Caco-2 (cell line): ENCODE measurements at regions of chr10 and their contacts with region 1.

Region 1: DNA sequence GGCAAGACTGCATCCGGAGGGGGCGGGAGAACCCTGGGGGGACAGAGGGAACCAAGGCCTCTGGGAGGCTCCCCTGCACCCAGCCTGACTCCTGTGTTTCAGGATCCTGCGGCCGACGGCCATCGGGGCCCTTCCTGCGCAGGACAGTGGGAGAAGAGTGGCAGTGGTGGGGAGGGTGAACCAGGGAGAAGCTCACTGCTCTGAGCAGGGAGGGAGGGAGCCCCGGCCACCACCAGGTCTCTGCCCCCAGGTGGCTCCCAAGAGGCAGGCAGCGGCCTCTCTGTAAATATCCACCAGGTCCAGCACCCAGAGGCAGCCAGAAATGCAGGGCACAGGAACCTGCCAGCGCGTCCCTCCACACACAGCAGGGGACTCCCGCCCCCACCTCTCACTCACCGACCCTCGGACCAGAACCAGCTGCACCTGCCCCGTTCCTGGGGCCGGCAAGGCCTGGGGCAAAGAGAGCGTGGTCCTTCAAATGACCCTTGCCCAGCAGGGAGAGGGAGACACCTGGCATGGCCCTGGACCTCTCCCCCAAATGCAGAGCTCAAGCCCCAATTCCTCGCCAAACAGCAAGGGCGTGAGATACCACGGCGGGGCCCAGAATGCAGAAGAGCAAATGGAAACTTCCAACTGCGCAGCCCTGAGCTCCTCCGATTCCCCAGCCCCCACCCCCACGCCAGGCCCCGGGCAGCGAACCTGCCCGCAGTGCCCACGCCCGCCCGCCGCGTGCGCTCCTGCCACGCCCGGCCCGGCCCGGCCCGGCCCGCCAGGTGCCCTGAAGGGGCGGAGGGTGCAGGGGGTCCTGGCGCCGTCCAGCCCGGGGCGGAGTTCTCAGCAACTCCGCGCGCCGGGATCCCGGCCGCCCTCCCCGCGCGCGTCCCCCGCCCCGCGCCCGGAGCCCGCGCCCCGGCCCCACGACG is 805 bp downstream of the RASGEF1A start:
- DNase-seq: peak; percentile 80 to 86
- H3K4me3 ChIP-seq: peak overlapping the region; percentile 43
- H3K4me3 Mint-ChIP-seq: peak overlapping the region; percentile 73
- H3K27ac Mint-ChIP-seq: no peak overlapping the region
- H3K4me1 ChIP-seq: no peaks in the 10 kb centered on the region
- H3K4me1 Mint-ChIP-seq: no peaks in the 10 kb centered on the region
- H3K27me3 ChIP-seq: peaks cover 9% of the 10 kb centered on the region
- H3K27me3 Mint-ChIP-seq: peaks cover 32% of the 10 kb centered on the region
- CTCF ChIP-seq: peak; percentile 83 to 88

Region 2: GRCh38 chr10:43215758-43216455 is 50.2 kb before region 1 on chr10:
- CTCF ChIA-PET with region 1: no interaction called
- POLR2A ChIA-PET with region 1: no interaction called
- intact Hi-C with region 1: no loop called
- DNase-seq: no peak
- H3K4me3 ChIP-seq: no peak overlapping the region
- H3K4me3 Mint-ChIP-seq: no peak overlapping the region
- H3K27ac Mint-ChIP-seq: no peak overlapping the region
- H3K4me1 ChIP-seq: no peaks in the 10 kb centered on the region
- H3K4me1 Mint-ChIP-seq: no peaks in the 10 kb centered on the region
- H3K27me3 ChIP-seq: no peaks in the 10 kb centered on the region
- H3K27me3 Mint-ChIP-seq: peaks cover 14% of the 10 kb centered on the region
- CTCF ChIP-seq: no peak

Region 3: DNA sequence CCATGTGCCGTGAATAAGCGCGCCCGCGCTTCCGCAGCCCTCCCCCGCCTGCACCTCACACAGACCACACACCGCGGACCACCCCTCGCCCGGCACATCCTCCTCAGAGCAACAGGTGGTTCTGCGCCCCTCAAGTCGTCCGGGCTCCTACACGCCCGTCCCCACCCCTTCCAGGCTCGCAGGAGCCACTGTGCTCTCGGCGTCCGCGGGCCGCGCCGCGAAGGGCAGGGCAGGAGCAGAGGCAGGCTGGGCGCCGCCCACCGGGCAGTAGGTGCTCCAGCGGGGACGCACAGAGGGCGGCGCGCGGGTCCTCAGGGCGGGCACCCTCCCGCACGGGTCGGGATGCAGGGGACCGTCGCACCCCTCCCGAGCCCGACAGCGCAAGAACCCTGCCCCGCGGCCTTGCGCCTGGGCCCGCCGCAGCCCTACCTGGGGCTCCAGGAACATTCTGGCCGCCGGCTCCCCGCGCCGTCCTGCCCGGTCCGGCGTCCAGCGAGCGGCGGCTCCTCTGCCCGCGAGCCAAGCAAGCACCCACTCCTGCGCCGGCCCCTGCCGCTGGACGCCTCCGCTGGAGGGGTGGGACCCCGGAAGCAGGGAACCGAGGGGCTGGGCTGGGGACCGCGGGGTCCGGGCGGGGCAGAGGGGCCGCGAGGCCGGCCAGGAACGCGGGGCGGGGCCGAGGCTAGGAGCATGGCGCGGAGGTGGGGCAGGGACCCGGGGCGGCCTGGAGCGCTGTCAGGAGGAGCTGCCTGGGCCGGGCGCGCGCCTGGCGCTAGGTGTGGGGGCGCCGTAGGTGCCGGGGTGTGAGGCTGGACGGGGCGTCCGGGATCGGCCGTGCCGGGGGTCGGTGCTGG is 36.6 kb before region 1 on chr10:
- CTCF ChIA-PET with region 1: interaction called, 4 read pairs
- POLR2A ChIA-PET with region 1: no interaction called
- intact Hi-C with region 1: loop called (anchors 5 kb)
- DNase-seq: peak; percentile 40 to 67
- H3K4me3 ChIP-seq: peak overlapping the region; percentile 47
- H3K4me3 Mint-ChIP-seq: peak overlapping the region; percentile 54
- H3K27ac Mint-ChIP-seq: no peak overlapping the region
- H3K4me1 ChIP-seq: peaks cover 12% of the 10 kb centered on the region; the same call in 1 of the 2 replicates
- H3K4me1 Mint-ChIP-seq: no peaks in the 10 kb centered on the region
- H3K27me3 ChIP-seq: peaks cover 5% of the 10 kb centered on the region; the same call in 1 of the 2 replicates
- H3K27me3 Mint-ChIP-seq: peaks cover 26% of the 10 kb centered on the region
- CTCF ChIP-seq: no peak

Region 4: DNA sequence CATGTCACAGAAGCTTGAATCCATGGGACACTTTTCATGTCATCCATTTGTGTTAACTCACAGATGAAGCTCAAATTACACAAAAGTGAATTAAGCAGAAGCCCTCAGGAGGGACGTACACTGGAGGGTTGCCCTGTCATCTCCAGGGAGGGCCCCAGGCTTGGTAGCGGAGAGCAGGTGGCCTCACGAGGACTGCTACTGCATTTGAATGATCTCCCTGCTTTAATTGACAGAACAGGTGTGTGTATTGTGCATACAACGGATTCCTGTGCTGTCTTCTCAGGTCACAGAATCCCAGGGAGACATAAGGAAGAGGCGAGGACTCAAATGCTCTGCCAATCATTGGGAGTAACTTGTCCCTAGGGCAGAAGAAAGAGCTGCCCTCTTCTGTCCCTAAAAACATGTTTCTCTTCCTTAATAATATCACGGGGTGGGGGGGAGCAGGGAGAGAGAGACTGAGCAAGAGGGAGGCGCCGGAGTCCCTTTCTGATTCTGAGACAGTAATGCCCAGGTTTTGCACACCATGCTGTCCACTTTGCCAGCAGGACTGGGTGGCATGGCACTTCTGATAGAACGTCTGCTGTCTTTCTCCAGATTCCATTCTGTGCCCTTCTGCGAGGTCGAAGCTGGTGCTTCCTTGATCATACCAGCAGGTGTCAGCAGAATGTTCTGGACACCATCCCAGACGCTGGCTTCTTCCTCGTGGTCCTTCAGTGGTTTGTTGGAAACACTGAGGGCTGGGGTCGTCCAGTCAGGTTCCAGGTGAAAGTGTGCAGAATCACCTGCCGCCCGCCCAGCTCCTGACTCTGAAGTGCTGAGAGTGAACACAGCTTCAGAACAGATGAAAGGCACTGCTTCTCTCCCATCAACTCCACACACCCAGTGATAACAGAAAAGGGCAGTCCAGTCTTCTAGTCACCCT is 27.0 kb after region 1 on chr10:
- CTCF ChIA-PET with region 1: interaction called, 14 read pairs
- POLR2A ChIA-PET with region 1: no interaction called
- intact Hi-C with region 1: no loop called
- DNase-seq: peak; percentile 77
- H3K4me3 ChIP-seq: no peak overlapping the region
- H3K4me3 Mint-ChIP-seq: peak overlapping the region; percentile 14
- H3K27ac Mint-ChIP-seq: no peak overlapping the region
- H3K4me1 ChIP-seq: 0 out of 2 replicates have a peak, but pooled peaks cover 4% of the 10 kb centered on the region
- H3K4me1 Mint-ChIP-seq: no peaks in the 10 kb centered on the region
- H3K27me3 ChIP-seq: no peaks in the 10 kb centered on the region
- H3K27me3 Mint-ChIP-seq: peaks cover 5% of the 10 kb centered on the region
- CTCF ChIP-seq: peak; percentile 87 to 97

Region 5: GRCh38 chr10:43304687-43305340 is 38.8 kb after region 1 on chr10:
- CTCF ChIA-PET with region 1: interaction called, 11 read pairs
- POLR2A ChIA-PET with region 1: no interaction called
- intact Hi-C with region 1: no loop called
- DNase-seq: peak; percentile 72 to 75
- H3K4me3 ChIP-seq: peak overlapping the region; percentile 59
- H3K4me3 Mint-ChIP-seq: peak overlapping the region; percentile 77
- H3K27ac Mint-ChIP-seq: peak overlapping the region; percentile 82
- H3K4me1 ChIP-seq: 0 out of 2 replicates have a peak, but pooled peaks cover 4% of the 10 kb centered on the region
- H3K4me1 Mint-ChIP-seq: peaks cover 7% of the 10 kb centered on the region
- H3K27me3 ChIP-seq: no peaks in the 10 kb centered on the region
- H3K27me3 Mint-ChIP-seq: peaks cover 6% of the 10 kb centered on the region
- CTCF ChIP-seq: no peak